IMR-90 (cell line): ENCODE measurements at regions of chr17 and their contacts with region 1.

Region 1: GRCh38 chr17:27654654-27655524 is 23.9 kb downstream of the LGALS9 start:
- DNase-seq: peak; percentile 45
- ATAC-seq: peak; percentile 75
- H3K4me3 ChIP-seq: no peak overlapping the region
- H3K27ac ChIP-seq: no peak overlapping the region
- H3K4me1 ChIP-seq: no peaks in the 10 kb centered on the region
- H3K27me3 ChIP-seq: peaks cover 2% of the 10 kb centered on the region; the same call in 1 of the 2 replicates
- CTCF ChIP-seq: peak; percentile 73
- POLR2A ChIP-seq: no peak
- RAD21 ChIP-seq: peak; percentile 52

Region 2: DNA sequence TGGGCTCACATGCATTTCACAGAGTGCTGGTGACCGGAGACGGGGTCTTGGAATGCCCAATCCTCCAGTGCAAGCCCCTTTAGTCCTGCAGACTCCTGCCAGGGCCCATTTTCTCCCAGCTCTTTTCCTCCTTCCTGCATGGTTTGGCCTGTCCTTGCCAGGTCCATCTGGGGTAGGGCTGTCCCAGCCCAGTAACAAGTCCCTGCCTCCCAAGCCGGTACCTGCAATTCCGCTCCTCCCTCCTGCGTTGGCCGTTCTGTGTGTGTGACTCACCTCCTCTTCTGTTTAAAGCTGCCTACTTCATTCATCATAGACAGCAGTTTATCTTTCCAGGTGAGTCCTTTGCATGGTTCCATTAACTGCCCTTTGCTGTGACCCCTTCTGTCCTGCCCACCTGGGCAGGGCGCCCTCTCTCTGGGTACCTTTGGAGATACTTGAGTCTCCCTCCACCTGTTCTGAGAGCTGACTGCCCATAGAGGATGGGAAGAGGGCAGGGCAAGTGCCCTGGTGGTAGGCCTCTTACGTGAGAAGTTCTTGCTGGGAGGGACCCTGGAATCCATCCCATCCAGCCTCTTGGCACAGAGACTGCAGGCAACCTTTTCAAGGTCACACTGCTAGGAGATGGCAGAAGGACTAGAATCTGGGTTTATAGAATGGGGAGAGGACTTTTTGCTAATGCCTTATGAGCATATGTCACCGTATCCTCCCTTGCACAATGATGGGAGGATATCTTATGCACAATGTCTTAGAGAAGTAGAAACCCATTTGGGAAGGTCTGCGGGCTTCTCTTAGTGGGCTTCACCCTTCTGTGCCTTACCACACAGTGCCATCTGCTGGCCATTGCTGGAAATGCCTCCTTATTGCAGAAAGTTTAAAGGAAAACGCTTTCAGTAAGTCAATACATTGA is 53.6 kb before region 1 on chr17:
- CTCF ChIA-PET with region 1: interaction called, 5 read pairs
- POLR2A ChIA-PET with region 1: no interaction called
- dilution Hi-C with region 1: no loop called
- in situ Hi-C with region 1: no loop called
- intact Hi-C with region 1: loop called (anchors 1 kb)
- DNase-seq: peak; percentile 83
- ATAC-seq: peak; percentile 65
- H3K4me3 ChIP-seq: no peak overlapping the region
- H3K27ac ChIP-seq: no peak overlapping the region
- H3K4me1 ChIP-seq: peaks cover 2% of the 10 kb centered on the region; the same call in 1 of the 2 replicates
- H3K27me3 ChIP-seq: no peaks in the 10 kb centered on the region
- CTCF ChIP-seq: peak; percentile 97
- POLR2A ChIP-seq: peak; percentile 37; the same call in 1 of the 2 replicates
- RAD21 ChIP-seq: peak; percentile 97

Region 3: GRCh38 chr17:27760069-27760885 is 105.4 kb after region 1 on chr17:
- CTCF ChIA-PET with region 1: interaction called, 10 read pairs
- POLR2A ChIA-PET with region 1: no interaction called
- dilution Hi-C with region 1: no loop called
- in situ Hi-C with region 1: no loop called
- intact Hi-C with region 1: loop called (anchors 1 kb)
- DNase-seq: peak; percentile 14
- ATAC-seq: peak; percentile 75
- H3K4me3 ChIP-seq: no peak overlapping the region
- H3K27ac ChIP-seq: no peak overlapping the region
- H3K4me1 ChIP-seq: no peaks in the 10 kb centered on the region
- H3K27me3 ChIP-seq: no peaks in the 10 kb centered on the region; the same call in 1 of the 2 replicates
- CTCF ChIP-seq: peak; percentile 74
- POLR2A ChIP-seq: no peak
- RAD21 ChIP-seq: peak; percentile 67

Region 4: DNA sequence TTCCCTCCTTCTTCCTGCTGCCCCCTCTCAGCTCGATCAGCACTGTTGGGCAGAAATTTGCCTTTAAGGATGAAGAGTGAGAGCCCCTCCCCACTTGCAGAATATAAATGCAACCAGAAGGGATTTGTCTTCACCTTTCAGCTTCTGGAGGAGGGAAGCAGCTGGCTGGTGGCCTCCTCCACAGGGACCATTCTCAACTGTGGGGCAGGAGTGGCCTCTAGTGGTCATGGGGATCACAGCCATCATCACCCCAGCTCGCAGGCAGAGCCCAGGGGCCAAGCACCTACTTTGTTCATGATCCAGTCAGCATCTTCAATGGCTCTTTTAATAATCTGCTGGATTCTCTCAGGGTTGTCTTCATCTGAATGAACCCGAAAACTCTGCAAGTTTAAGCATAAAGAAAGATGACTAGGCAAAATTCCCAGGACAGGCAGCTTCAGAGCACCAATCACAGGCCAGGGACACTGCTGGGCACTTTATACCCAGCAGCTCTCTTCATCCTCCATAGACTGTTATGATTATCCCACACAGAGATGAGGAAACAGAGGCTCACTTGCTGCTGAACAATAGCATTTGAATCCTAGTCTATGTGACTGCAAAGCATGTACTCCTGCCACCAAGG is 225.2 kb after region 1 on chr17:
- CTCF ChIA-PET with region 1: interaction called, 10 read pairs
- POLR2A ChIA-PET with region 1: no interaction called
- dilution Hi-C with region 1: no loop called
- in situ Hi-C with region 1: loop called (anchors 10 kb)
- intact Hi-C with region 1: loop called (anchors 2 kb)
- DNase-seq: peak; percentile 54
- ATAC-seq: peak; percentile 98
- H3K4me3 ChIP-seq: no peak overlapping the region
- H3K27ac ChIP-seq: no peak overlapping the region
- H3K4me1 ChIP-seq: no peaks in the 10 kb centered on the region
- H3K27me3 ChIP-seq: no peaks in the 10 kb centered on the region; the same call in 1 of the 2 replicates
- CTCF ChIP-seq: peak; percentile 88
- POLR2A ChIP-seq: no peak
- RAD21 ChIP-seq: peak; percentile 93